Activated naive CD4-positive, alpha-beta T cell treated with anti-CD3 and anti-CD28 coated beads for 36 hours (primary cell): ENCODE measurements at regions of chr3 and their contacts with region 1.

Region 1: DNA sequence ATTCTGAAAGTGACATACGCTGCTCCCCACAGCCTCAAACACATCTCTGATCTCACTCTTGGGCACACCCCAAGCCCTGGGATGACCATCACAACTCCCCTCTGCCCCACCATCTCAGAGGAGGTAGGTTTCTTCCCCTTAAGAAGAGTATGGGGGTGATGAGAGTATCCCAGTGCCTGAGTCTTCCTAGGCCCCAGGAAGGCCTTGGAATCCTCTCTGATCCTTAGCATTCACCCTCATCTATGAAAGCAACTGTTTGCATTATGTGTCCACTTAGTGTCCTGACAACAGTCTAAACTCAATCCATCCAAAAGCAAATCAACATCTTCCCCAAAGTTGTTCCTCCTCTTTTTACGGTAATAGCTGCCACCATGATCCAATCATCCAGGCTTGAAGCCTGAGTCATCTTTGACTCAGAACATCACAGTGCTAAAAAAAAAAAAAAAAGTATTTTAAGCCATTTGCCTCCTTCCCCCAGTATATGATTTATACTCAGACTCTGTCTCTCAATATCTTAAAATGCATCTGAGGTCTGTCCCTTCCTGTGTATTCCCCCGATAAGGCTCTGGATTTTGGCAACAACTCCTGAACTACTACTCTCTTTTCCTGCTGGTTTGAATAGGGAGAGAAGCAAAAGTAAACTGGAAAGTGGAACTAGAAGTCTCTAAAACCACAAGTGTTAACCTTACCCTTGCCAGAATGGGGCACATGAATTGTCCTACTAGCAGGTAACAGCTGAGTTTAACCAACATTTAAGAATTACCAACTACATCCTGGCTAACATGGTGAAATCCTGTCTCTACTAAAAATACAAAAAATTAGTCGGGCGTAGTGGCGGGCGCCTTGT is 22.5 kb downstream of the POPDC2 start:
- DNase-seq: peak; percentile 19
- H3K4me3 Mint-ChIP-seq: no peak overlapping the region
- H3K27ac Mint-ChIP-seq: peak overlapping the region; percentile 91
- H3K4me1 Mint-ChIP-seq: peaks cover 36% of the 10 kb centered on the region
- H3K27me3 Mint-ChIP-seq: no peaks in the 10 kb centered on the region

Region 2: GRCh38 chr3:119322835-119323722 is 314.8 kb before region 1 on chr3:
- CTCF ChIA-PET with region 1: no interaction called
- intact Hi-C with region 1: loop called (anchors 1 kb)
- DNase-seq: peak; percentile 96
- H3K4me3 Mint-ChIP-seq: peak overlapping the region; percentile 83
- H3K27ac Mint-ChIP-seq: peak overlapping the region; percentile 94
- H3K4me1 Mint-ChIP-seq: peaks cover 47% of the 10 kb centered on the region
- H3K27me3 Mint-ChIP-seq: no peaks in the 10 kb centered on the region

Region 3: GRCh38 chr3:119463171-119464169 is 174.4 kb before region 1 on chr3 and contains the start of gene TMEM39A:
- CTCF ChIA-PET with region 1: interaction called, 3 read pairs
- intact Hi-C with region 1: loop called (anchors 1 kb)
- DNase-seq: peak; percentile 98
- H3K4me3 Mint-ChIP-seq: peak within 1 kb of the TSS; percentile 96
- H3K27ac Mint-ChIP-seq: peak within 1 kb of the TSS; percentile 90
- H3K4me1 Mint-ChIP-seq: peaks cover 32% of the 10 kb centered on the region
- H3K27me3 Mint-ChIP-seq: no peaks in the 10 kb centered on the region
- total RNA-seq, gene TMEM39A: 21.4 to 26.9 TPM

Region 4: DNA sequence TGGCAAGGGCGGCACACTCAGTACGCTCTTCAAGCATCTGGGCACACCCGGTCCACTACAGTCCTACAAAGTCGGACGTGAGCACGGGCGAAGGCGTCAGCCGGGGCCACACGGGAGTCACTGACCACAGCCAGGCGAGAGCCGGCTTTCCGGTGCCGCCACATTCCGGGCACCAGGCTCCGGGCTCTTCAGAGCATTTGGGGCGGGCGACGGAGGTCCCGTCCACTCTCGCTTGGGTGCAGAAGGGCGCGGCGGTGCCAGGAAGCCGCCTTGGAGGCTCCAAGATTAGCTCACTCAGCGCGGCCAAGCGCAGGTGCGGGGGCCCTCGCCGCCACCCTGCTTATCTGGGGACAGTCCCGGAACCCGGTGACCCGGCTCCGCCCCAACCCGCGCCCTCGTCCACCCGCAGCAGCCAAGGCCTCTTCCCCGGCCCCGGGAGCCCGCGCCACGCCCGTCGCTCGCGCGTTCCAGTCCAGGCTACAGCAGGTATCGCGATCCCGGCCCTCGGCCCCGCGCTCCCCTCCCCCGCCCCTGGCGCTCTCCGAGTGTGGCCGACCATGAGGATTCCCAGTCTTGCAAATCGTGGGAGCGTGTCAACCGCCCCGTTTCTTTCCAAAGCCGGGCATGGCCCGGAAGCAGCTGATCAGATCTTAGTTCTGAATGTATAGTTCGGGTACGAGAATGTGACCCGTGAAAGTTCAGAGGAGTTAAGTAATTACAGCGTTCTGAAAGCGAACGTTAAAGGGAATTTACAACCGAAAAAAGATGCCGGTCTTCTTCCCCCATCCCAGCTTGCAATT is 58.3 kb before region 1 on chr3 and contains the start of gene ADPRH:
- CTCF ChIA-PET with region 1: no interaction called
- intact Hi-C with region 1: loop called (anchors 1 kb)
- DNase-seq: peak; percentile 66
- H3K4me3 Mint-ChIP-seq: peak within 1 kb of the TSS; percentile 86
- H3K27ac Mint-ChIP-seq: peak within 1 kb of the TSS; percentile 54
- H3K4me1 Mint-ChIP-seq: peaks cover 15% of the 10 kb centered on the region
- H3K27me3 Mint-ChIP-seq: peaks cover 18% of the 10 kb centered on the region
- total RNA-seq, gene ADPRH: 2.6 to 3.1 TPM

Region 5: DNA sequence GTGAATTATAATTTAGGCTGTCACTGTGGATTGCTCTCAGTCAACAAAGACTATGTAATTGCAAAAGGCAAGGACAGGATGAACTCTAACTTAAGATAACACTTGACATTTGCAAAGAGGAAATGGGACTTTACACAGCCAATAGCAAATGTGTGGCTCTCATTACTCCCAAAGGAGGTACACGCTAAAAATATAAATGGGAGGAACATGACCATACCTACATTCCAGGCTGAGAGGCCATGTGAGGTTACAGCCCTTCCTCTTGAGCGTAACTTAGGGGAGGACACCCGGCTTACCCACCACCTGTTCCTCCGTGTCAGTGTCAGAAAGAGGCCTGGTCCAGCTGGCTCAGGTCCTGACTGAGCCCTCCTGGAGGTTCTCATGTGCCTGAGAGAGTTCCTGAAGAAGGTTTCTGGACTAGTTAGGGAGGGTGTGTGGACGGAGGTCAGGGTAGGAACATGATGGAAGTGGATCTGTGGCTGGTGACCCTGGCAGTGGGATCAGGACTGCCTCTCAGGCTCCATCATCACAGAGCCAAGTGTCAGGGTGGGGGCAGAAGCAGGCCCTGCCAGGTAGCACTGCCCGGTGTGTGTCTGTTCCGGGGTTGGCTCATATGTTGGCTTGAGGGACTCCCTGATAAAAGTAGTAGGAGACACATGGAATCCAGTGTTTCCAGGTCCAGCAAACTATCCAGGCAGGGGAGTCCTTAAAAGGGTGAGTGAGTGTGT is 14.6 kb after region 1 on chr3:
- CTCF ChIA-PET with region 1: no interaction called
- intact Hi-C with region 1: no loop called
- DNase-seq: no peak
- H3K4me3 Mint-ChIP-seq: no peak overlapping the region
- H3K27ac Mint-ChIP-seq: no peak overlapping the region
- H3K4me1 Mint-ChIP-seq: no peaks in the 10 kb centered on the region
- H3K27me3 Mint-ChIP-seq: no peaks in the 10 kb centered on the region

Region 6: DNA sequence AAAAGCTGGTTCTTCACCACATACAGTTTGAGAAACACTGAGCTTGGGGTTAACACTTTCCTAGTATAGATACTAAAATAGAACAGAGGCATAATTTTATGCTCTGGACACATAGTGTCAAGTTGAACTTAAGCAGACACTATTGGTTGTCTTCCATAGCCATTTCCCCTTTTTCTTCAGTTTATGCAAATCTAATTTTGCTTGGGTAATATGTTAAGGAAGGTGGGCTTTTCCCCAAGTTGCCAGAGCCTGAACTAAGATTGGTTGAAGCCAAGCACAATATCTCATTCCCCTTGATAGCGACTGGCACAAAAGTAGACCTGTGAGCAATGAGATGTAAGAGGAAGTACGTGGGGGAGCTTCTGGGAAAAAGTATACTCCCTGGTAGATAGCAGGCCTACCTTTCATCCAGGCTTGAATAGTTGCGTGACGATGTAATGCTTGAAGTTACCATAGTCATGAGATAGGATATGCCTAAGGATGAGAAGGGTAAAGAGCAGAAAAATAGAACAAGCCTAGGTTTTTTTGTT is 27.0 kb after region 1 on chr3:
- CTCF ChIA-PET with region 1: no interaction called
- intact Hi-C with region 1: loop called (anchors 2 kb)
- DNase-seq: no peak
- H3K4me3 Mint-ChIP-seq: no peak overlapping the region
- H3K27ac Mint-ChIP-seq: no peak overlapping the region
- H3K4me1 Mint-ChIP-seq: peaks cover 1% of the 10 kb centered on the region
- H3K27me3 Mint-ChIP-seq: no peaks in the 10 kb centered on the region